Spleen (tissue), 13 donors: ENCODE measurements at regions of chr4 and their contacts with region 1.

Region 1: GRCh38 chr4:16026160-16026761 is 57.6 kb downstream of the PROM1 start:
- DNase-seq: no peak
- H3K4me3 ChIP-seq: no peak overlapping the region
- H3K27ac ChIP-seq: no peak overlapping the region
- H3K4me1 ChIP-seq: peaks cover 3 to 20% (median 6%) of the 10 kb centered on the region in 6 donors
- H3K27me3 ChIP-seq: peaks cover 0 to 5% (median 0%) of the 10 kb centered on the region in 7 donors
- CTCF ChIP-seq: peak; percentile 66 to 88 (median 82)
- POLR2A ChIP-seq: no peak

Region 2: DNA sequence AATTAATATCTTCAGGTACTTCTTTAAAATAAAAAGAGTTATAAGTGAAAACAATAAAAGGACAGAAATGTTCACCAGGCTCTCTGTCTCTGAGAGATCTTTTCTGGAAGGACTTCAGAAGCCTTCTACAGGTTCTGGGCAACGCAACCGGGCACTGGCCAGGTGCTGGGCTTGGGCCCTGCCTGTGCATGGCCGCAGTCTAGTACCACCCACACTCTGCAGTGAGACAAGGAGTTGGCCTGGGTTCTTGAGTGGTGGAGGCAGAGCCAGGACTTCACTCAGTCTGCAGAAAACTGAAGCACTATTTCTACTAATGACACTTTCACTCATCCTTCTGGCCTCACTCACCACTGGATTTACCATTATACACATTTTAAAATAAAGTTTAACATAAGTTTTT is 178.2 kb after region 1 on chr4:
- intact Hi-C with region 1: loop called (anchors 5 kb)
- DNase-seq: no peak
- H3K4me3 ChIP-seq: no peak overlapping the region
- H3K27ac ChIP-seq: no peak overlapping the region
- H3K4me1 ChIP-seq: peaks cover 0 to 76% (median 19%) of the 10 kb centered on the region in 6 donors
- H3K27me3 ChIP-seq: no peaks in the 10 kb centered on the region
- CTCF ChIP-seq: no peak
- POLR2A ChIP-seq: no peak

Region 3: GRCh38 chr4:16264798-16265197 is 238.5 kb after region 1 on chr4:
- intact Hi-C with region 1: loop called (anchors 2 kb)
- DNase-seq: no peak
- H3K4me3 ChIP-seq: no peak overlapping the region
- H3K27ac ChIP-seq: no peak overlapping the region
- H3K4me1 ChIP-seq: peaks cover 0 to 47% (median 6%) of the 10 kb centered on the region in 6 donors
- H3K27me3 ChIP-seq: no peaks in the 10 kb centered on the region
- CTCF ChIP-seq: peak; percentile 27 to 79 (median 64)
- POLR2A ChIP-seq: no peak

Region 4: DNA sequence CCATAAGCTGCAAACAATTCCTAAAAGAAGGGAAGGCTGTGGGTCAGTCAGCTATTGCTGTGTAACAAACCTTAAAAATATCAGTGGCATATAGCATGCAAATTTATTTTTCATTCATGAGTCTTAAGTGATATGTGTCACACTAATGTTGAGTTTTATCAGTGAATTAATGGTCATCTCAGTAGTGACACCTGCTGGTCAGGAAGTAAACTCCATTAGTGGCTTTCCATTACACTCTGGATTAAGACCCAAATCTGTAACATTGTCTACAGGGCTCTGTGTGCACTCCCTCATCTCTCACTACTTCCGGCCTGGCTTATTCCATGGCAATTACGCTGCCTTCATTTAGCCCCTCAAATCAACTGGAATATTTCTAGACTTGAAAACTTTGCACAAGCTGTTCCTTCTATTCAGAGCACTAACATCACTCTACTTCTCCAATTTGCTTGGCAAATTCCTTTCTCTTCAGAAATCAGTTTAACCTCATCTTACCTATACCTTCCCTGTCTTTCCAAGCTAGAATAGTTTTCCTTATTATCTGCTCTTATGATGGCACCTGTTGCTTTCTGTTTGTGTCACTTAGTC is 417.3 kb after region 1 on chr4:
- intact Hi-C with region 1: loop called (anchors 10 kb)
- DNase-seq: no peak
- H3K4me3 ChIP-seq: no peak overlapping the region
- H3K27ac ChIP-seq: no peak overlapping the region
- H3K4me1 ChIP-seq: no peaks in the 10 kb centered on the region
- H3K27me3 ChIP-seq: no peaks in the 10 kb centered on the region
- CTCF ChIP-seq: peak; percentile 21 to 78 (median 65)
- POLR2A ChIP-seq: no peak